Activated CD4-positive, alpha-beta T cell treated with anti-CD3 and anti-CD28 coated beads for 36 hours (primary cell): ENCODE measurements at regions of chr17 and their contacts with region 1.

Region 1: GRCh38 chr17:39668199-39668966 is at the start of gene PNMT:
- DNase-seq: peak; percentile 87
- ATAC-seq: peak; percentile 79
- H3K4me3 Mint-ChIP-seq: peak within 1 kb of the TSS; percentile 50
- H3K27ac Mint-ChIP-seq: no peak within 1 kb of the TSS
- H3K4me1 Mint-ChIP-seq: peaks cover 10% of the 10 kb centered on the region
- H3K27me3 Mint-ChIP-seq: peaks cover 13% of the 10 kb centered on the region
- total RNA-seq, gene PNMT: not detected

Region 2: GRCh38 chr17:39653662-39654331 is 14.6 kb before region 1 on chr17:
- CTCF ChIA-PET with region 1: interaction called, 85 read pairs
- POLR2A ChIA-PET with region 1: no interaction called
- intact Hi-C with region 1: no loop called
- DNase-seq: peak; percentile 92
- ATAC-seq: peak; percentile 94
- H3K4me3 Mint-ChIP-seq: no peak overlapping the region
- H3K27ac Mint-ChIP-seq: no peak overlapping the region
- H3K4me1 Mint-ChIP-seq: peaks cover 36% of the 10 kb centered on the region
- H3K27me3 Mint-ChIP-seq: no peaks in the 10 kb centered on the region

Region 3: DNA sequence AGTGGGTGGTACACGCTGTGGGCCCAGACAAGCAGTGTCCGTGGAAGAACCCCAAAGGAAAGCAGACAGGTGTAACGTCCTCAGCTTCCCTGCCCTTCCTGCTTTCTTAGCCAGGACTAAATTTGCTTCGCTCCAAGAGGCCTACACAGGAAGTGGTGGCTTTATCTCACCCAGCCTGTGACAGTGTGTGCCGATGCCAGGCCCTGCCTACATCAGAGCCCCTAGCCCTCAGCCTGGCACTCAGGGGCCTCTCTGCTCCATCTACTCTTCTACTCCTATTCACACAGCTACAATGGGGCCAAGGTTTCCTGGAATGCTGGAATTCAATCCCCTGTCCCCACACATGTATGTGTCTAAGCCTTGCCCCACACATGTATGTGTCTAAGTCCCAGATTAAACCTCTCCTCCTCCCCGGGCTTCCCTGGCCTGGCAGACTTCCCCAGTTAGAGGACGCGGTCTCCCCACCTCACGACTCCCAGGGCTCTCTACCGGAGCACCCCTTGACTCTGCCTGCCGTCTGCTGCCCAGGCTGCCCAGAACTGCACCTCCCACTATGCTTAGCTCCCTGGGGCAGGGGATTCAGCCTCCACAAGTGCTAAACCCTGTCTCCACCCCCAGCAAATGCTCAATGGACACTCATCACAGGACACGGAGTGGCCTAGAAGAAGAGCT is 11.3 kb after region 1 on chr17:
- CTCF ChIA-PET with region 1: interaction called, 11 read pairs
- POLR2A ChIA-PET with region 1: no interaction called
- intact Hi-C with region 1: no loop called
- DNase-seq: peak; percentile 55
- ATAC-seq: peak; percentile 79
- H3K4me3 Mint-ChIP-seq: no peak overlapping the region
- H3K27ac Mint-ChIP-seq: peak overlapping the region; percentile 90
- H3K4me1 Mint-ChIP-seq: peaks cover 56% of the 10 kb centered on the region
- H3K27me3 Mint-ChIP-seq: no peaks in the 10 kb centered on the region

Region 4: GRCh38 chr17:39687811-39688518 is 19.6 kb after region 1 on chr17 and contains the start of gene PGAP3:
- CTCF ChIA-PET with region 1: interaction called, 3 read pairs
- POLR2A ChIA-PET with region 1: interaction called, 12 read pairs
- intact Hi-C with region 1: no loop called
- DNase-seq: peak; percentile 92
- ATAC-seq: peak; percentile 96
- H3K4me3 Mint-ChIP-seq: peak within 1 kb of the TSS; percentile 86
- H3K27ac Mint-ChIP-seq: peak within 1 kb of the TSS; percentile 95
- H3K4me1 Mint-ChIP-seq: peaks cover 19% of the 10 kb centered on the region
- H3K27me3 Mint-ChIP-seq: no peaks in the 10 kb centered on the region
- total RNA-seq, gene PGAP3: 8.6 to 11.9 TPM

Region 5: GRCh38 chr17:39730095-39730921 is 61.9 kb after region 1 on chr17 and contains the start of gene MIEN1:
- CTCF ChIA-PET with region 1: interaction called, 6 read pairs
- POLR2A ChIA-PET with region 1: interaction called, 4 read pairs
- intact Hi-C with region 1: loop called in 1 of 2 experiments (anchors 1 kb)
- DNase-seq: peak; percentile 97
- ATAC-seq: peak; percentile 92
- H3K4me3 Mint-ChIP-seq: peak within 1 kb of the TSS; percentile 90
- H3K27ac Mint-ChIP-seq: peak within 1 kb of the TSS; percentile 88
- H3K4me1 Mint-ChIP-seq: peaks cover 15% of the 10 kb centered on the region
- H3K27me3 Mint-ChIP-seq: no peaks in the 10 kb centered on the region
- total RNA-seq, gene MIEN1: 32.5 to 39.4 TPM